ENCODE measurements at regions of chr9 and their contacts with region 1.

Region 1: DNA sequence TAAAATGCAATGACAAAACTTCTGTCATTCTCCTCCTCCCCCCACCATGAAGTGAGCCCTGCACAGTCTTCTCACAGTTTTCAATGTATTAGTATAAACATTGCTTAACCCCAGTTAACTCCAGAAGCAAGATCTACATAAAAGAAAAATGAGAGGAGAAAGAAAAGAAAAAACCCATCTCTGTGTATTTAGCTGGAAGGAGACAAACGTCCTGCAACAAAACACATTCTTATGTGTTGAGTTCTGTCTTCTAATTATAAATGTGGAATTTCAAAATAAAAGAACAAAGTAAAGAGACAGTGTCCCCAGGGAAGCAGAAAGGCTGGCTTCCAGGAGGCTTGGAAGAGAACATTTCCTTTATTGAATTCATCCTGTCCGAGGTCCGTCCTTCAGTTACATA is 491.9 kb upstream of the TUSC1 start:
- DNase-seq: no peak
- ATAC-seq: peak; percentile 17; the same call in 1 of the 2 replicates
- H3K4me3 ChIP-seq: no peak overlapping the region
- H3K27ac ChIP-seq: no peak overlapping the region
- H3K4me1 ChIP-seq: peaks cover 1% of the 10 kb centered on the region; the same call in 1 of the 2 replicates
- H3K27me3 ChIP-seq: no peaks in the 10 kb centered on the region
- CTCF ChIP-seq: no peak
- POLR2A ChIP-seq: no peak
- RAD21 ChIP-seq: no peak

Region 2: DNA sequence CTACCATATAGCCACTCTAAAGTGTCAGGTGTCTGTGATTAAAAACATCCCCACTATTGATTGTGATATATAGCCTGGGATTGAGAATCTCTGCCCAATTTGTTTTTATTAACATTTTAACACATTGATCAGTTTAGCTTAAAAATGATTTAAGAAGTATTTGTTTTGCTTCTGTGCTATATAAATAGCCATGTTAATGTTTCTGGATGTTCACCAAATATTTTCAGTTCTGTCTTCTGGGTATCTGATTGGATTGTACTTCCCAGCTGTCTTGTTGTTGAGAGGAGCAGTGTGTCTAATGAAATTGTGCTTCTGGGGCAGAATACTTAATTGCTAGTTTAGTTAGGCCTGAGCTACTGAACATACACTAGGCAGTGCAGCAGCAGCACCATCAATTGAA is 365.3 kb before region 1 on chr9:
- CTCF ChIA-PET with region 1: no interaction called
- POLR2A ChIA-PET with region 1: no interaction called
- dilution Hi-C with region 1: no loop called
- in situ Hi-C with region 1: no loop called
- intact Hi-C with region 1: no loop called
- DNase-seq: no peak
- ATAC-seq: no peak
- H3K4me3 ChIP-seq: no peak overlapping the region
- H3K27ac ChIP-seq: no peak overlapping the region
- H3K4me1 ChIP-seq: no peaks in the 10 kb centered on the region
- H3K27me3 ChIP-seq: no peaks in the 10 kb centered on the region
- CTCF ChIP-seq: no peak
- POLR2A ChIP-seq: no peak
- RAD21 ChIP-seq: no peak

Region 3: GRCh38 chr9:25964239-25964638 is 206.0 kb before region 1 on chr9:
- CTCF ChIA-PET with region 1: no interaction called
- POLR2A ChIA-PET with region 1: no interaction called
- dilution Hi-C with region 1: no loop called
- in situ Hi-C with region 1: no loop called
- intact Hi-C with region 1: loop called (anchors 10 kb)
- DNase-seq: peak; percentile 82
- ATAC-seq: peak; percentile 57
- H3K4me3 ChIP-seq: no peak overlapping the region
- H3K27ac ChIP-seq: no peak overlapping the region
- H3K4me1 ChIP-seq: no peaks in the 10 kb centered on the region
- H3K27me3 ChIP-seq: no peaks in the 10 kb centered on the region
- CTCF ChIP-seq: peak; percentile 82
- POLR2A ChIP-seq: no peak
- RAD21 ChIP-seq: peak; percentile 92

Region 4: GRCh38 chr9:26219961-26220360 is 49.8 kb after region 1 on chr9:
- CTCF ChIA-PET with region 1: no interaction called
- POLR2A ChIA-PET with region 1: no interaction called
- dilution Hi-C with region 1: no loop called
- in situ Hi-C with region 1: no loop called
- intact Hi-C with region 1: loop called (anchors 5 kb)
- DNase-seq: no peak
- ATAC-seq: no peak
- H3K4me3 ChIP-seq: no peak overlapping the region
- H3K27ac ChIP-seq: no peak overlapping the region
- H3K4me1 ChIP-seq: no peaks in the 10 kb centered on the region
- H3K27me3 ChIP-seq: no peaks in the 10 kb centered on the region
- CTCF ChIP-seq: no peak
- POLR2A ChIP-seq: no peak
- RAD21 ChIP-seq: no peak

Region 5: DNA sequence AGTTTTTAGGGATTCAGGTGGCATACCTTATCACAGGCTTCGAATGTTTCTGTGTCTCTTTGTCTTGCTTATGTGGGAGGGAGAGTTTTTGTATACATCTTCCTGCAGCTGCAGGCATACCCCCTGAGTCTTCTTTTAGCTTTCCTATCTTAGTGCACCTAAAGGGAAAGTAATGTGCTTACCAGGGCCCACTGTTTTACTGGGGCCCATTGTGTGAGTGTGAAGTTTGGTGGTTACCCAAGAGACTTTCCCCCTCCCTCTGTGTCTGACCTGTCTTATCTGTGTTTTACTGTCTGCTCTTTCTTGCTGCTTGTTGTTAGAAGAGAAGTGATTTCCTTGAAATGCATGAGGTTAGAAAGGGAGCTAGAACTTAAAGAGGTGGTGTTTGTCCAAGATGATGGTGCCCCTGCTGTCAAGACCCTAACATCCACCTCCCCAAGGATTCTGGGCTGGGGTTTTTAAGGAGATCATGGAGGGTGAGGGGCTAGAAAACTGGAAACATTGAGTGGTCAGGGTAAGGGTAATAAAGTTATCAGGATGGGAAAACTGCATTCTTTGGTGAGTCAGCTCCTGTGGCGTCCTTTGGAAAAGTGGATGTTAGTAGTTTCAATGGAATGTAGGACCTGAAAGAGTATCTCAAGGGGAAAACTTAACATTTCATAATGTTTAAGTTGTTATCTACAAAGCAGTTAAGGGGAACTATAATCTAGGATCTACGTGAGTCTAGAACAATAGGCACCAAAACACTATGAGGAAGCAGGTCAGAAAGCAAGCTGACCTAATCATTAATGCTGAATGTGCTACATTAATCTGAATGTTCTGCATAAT is 91.5 kb after region 1 on chr9:
- CTCF ChIA-PET with region 1: no interaction called
- POLR2A ChIA-PET with region 1: no interaction called
- dilution Hi-C with region 1: no loop called
- in situ Hi-C with region 1: no loop called
- intact Hi-C with region 1: loop called (anchors 10 kb)
- DNase-seq: peak; percentile 87
- ATAC-seq: peak; percentile 72
- H3K4me3 ChIP-seq: no peak overlapping the region
- H3K27ac ChIP-seq: peak overlapping the region; percentile 99
- H3K4me1 ChIP-seq: peaks cover 18% of the 10 kb centered on the region
- H3K27me3 ChIP-seq: no peaks in the 10 kb centered on the region
- CTCF ChIP-seq: no peak
- POLR2A ChIP-seq: no peak; the same call in 1 of the 2 replicates
- RAD21 ChIP-seq: no peak